GM10248 (cell line): ENCODE measurements at regions of chr15 and their contacts with region 1.

Region 1: DNA sequence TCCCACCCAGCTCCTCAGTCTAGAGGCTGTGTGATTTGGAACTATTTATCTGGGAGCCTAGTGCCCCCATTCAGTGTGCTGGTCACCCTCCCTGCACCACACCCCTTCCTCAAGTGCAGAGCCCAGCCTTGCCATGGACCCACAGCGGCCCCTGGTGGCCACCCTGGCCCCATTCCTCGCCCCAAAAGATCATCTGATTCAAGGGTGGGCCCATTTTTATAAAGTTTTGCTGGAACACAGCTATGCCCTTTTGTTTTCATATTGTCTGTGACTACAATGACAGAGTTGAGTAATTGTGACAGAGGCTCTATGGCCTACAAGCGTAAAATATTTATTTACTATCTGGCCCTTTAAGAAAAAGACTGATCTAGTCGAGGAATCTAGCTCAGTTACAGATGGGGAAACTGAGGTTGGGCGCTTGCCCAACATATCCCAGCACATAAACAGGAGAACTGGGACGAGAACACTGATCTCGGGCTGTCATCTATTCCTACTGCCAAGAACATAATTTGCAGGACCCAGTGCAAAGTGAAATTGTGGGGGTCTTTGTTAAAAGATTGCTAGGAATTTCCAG is 1.8 kb downstream of the FES start:
- DNase-seq: peak; percentile 80
- CTCF ChIP-seq: peak; percentile 90

Region 2: GRCh38 chr15:90642464-90643300 is 243.4 kb before region 1 on chr15:
- CTCF ChIA-PET with region 1: interaction called, 45 read pairs
- POLR2A ChIA-PET with region 1: no interaction called
- DNase-seq: no peak
- CTCF ChIP-seq: no peak

Region 3: DNA sequence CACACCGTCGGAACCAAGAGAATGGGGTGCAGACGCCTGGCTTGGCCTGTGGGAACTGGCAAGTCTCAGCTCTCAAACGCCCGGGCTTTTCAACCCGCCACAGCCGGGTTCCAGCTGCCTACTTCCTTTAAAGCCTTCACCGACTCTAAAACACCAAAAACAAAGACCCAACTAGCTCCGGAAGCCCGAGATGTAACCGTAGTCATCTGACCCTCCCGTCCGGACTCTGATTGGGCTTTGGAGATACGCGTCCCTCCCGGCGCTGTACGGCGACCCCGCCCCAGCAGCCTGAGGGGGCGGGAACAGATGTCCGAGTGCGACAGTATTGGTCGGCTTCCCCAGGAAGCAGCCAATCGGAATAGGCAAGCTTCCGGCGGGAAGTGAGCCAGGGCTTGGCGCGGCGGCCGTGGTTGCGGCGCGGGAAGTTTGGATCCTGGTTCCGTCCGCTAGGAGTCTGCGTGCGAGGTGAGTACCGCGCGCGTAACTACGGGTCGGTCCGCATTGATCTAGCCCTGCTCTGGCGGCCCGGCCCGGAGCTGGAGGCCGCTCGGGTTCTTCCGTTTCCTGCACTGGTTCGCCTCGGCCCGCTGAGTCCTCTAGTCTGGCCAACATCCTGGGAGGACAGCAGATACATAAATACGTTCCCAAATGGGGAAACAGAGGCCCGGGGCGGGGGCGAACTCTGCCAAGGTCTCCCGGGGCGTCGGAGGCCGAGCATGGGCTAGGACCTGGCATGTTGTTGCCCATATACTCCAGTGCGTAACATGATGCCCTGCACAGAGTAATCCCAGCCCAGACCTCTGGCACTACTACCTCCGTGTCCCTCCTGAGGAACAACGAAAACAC is 168.9 kb before region 1 on chr15 and contains the start of gene BLM:
- CTCF ChIA-PET with region 1: interaction called, 12 read pairs
- POLR2A ChIA-PET with region 1: no interaction called
- DNase-seq: peak; percentile 99
- CTCF ChIP-seq: no peak

Region 4: GRCh38 chr15:90789462-90789861 is 96.7 kb before region 1 on chr15:
- CTCF ChIA-PET with region 1: interaction called, 13 read pairs
- POLR2A ChIA-PET with region 1: no interaction called
- DNase-seq: no peak
- CTCF ChIP-seq: no peak

Region 5: DNA sequence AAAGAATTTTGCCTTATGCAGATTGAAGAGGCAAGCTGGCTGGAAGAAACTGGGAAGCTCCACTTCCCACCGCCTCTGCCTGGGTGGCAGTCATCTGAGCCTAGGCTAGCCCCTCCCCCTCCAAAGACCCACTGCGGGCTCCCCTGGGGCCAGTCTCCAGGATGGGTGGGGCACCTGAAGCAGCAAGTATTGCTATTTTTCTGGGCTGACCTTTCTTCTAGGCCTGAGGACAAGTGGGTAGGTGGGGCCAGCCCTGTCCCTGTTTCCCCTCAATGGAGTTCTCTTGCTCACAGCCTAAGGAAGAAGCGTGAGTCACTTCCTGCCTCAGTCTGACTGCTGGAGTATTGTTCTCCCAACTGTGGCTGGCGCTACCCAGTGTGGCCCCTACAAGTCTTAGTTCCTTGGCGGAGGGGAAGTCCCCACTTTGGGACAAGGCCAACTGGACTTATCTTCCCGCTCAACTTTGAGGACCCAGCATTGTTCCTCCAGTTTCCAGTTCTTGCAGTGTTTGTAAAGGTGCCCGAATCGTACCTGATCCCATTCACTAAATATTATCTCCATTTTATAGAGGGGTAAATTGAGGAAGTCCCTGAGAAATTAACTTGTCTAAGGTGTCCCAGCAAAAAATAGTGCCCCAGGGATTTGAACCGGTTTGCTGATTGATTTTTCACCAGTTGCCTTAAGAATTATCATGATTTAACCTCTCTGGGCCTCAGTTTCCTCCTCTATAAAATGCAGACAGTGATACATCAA is 16.4 kb before region 1 on chr15:
- CTCF ChIA-PET with region 1: interaction called, 14 read pairs
- POLR2A ChIA-PET with region 1: interaction called, 3 read pairs
- DNase-seq: no peak
- CTCF ChIP-seq: no peak